ENCODE measurements at regions of chr5 and their contacts with region 1.

Region 1: DNA sequence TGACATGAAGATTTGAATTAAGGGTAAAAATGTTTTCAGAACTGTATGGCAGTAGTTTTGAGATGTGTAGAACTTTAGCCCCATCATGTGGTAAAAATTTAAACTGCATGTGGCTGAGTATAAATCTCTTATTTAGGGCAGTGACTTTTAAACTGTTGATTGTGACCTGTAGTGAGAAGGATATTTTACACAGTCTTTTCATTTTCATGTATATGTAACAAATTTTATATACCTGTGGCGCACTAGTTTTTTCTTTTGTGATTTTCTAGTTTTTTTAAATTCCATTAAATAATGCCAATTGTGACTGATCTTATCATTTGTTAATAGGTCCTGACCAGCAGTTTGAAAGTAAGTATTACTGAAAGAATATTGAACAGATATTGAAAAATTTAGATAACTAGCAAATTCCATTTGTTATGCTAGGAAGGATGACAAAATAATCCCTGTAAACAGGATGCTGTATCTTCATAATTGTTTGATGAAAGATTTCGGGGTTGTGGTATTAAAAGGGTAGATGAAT is 47.2 kb downstream of the GPBP1 start:
- DNase-seq: no peak
- ATAC-seq: peak; percentile 65

Region 2: GRCh38 chr5:56900858-56901578 is 320.1 kb before region 1 on chr5:
- intact Hi-C with region 1: loop called (anchors 5 kb)
- DNase-seq: no peak
- ATAC-seq: peak; percentile 61

Region 3: GRCh38 chr5:57137401-57137800 is 83.7 kb before region 1 on chr5:
- intact Hi-C with region 1: loop called (anchors 10 kb)
- DNase-seq: no peak
- ATAC-seq: no peak

Region 4: GRCh38 chr5:57173185-57174127 is 47.7 kb before region 1 on chr5 and contains the start of gene GPBP1:
- intact Hi-C with region 1: loop called (anchors 10 kb)
- DNase-seq: peak; percentile 98
- ATAC-seq: peak; percentile 93
- total RNA-seq, gene GPBP1: 60.2 TPM

Measured in left ventricle myocardium superior (tissue), 1 donor.